ENCODE measurements at regions of chr11 and their contacts with region 1.

Region 1: DNA sequence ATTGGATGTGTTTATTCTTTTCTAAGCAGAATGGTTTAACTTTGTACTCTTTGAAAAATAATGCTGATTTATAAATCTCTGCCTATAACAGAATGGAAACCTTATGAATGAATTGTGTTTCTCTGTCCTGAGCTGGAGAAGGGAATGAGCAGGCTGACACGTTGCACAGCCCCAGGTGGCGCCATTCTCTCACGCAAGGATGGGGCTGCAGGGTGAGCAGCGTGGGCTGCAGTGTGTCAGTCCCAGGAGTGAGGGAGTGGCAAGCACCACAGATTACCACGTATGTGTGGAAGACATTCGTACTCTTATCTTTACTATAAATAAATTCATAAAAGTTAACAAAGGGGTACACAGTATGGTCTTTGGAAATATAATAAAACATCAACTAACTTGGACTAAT is 33.4 kb downstream of the FDX1 start:
- DNase-seq: peak; percentile 70 to 79
- H3K4me3 ChIP-seq: no peak overlapping the region
- H3K4me3 Mint-ChIP-seq: no peak overlapping the region
- H3K27ac Mint-ChIP-seq: peak overlapping the region; percentile 24
- H3K4me1 ChIP-seq: no peaks in the 10 kb centered on the region
- H3K4me1 Mint-ChIP-seq: no peaks in the 10 kb centered on the region
- H3K27me3 ChIP-seq: no peaks in the 10 kb centered on the region
- H3K27me3 Mint-ChIP-seq: no peaks in the 10 kb centered on the region
- CTCF ChIP-seq: peak; percentile 73 to 75

Region 2: DNA sequence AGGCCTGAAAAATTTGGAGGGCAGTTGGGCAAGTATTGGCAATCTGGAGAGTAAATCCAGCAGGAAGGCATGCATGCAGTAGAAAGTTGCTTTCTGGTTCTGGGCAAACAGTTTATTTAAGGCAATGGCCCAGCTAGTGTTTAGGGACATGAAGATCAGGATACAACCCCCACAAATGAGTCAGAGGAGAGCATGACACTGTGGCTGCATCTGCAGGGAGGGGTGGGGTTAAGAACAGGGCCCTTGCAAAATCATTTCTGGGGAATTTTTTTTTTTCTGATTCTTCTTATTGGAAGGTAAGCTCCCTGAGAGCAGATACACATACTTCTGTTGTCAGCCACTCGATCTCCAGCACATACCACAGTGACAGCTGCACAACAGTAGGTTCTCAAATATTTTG is 27.7 kb after region 1 on chr11:
- CTCF ChIA-PET with region 1: no interaction called
- POLR2A ChIA-PET with region 1: no interaction called
- intact Hi-C with region 1: no loop called
- DNase-seq: no peak
- H3K4me3 ChIP-seq: no peak overlapping the region
- H3K4me3 Mint-ChIP-seq: no peak overlapping the region
- H3K27ac Mint-ChIP-seq: no peak overlapping the region
- H3K4me1 ChIP-seq: no peaks in the 10 kb centered on the region
- H3K4me1 Mint-ChIP-seq: no peaks in the 10 kb centered on the region
- H3K27me3 ChIP-seq: no peaks in the 10 kb centered on the region
- H3K27me3 Mint-ChIP-seq: peaks cover 6% of the 10 kb centered on the region
- CTCF ChIP-seq: no peak

Region 3: GRCh38 chr11:110582728-110583432 is 119.7 kb after region 1 on chr11:
- CTCF ChIA-PET with region 1: interaction called, 5 read pairs
- POLR2A ChIA-PET with region 1: no interaction called
- intact Hi-C with region 1: loop called (anchors 5 kb)
- DNase-seq: peak in 1 of 2 experiments; percentile 45
- H3K4me3 ChIP-seq: no peak overlapping the region
- H3K4me3 Mint-ChIP-seq: no peak overlapping the region
- H3K27ac Mint-ChIP-seq: peak overlapping the region; percentile 30
- H3K4me1 ChIP-seq: peaks cover 21% of the 10 kb centered on the region
- H3K4me1 Mint-ChIP-seq: peaks cover 24% of the 10 kb centered on the region
- H3K27me3 ChIP-seq: no peaks in the 10 kb centered on the region
- H3K27me3 Mint-ChIP-seq: no peaks in the 10 kb centered on the region
- CTCF ChIP-seq: no peak

Region 4: GRCh38 chr11:110665696-110666465 is 202.7 kb after region 1 on chr11:
- CTCF ChIA-PET with region 1: no interaction called
- POLR2A ChIA-PET with region 1: no interaction called
- intact Hi-C with region 1: no loop called
- DNase-seq: no peak
- H3K4me3 ChIP-seq: no peak overlapping the region
- H3K4me3 Mint-ChIP-seq: no peak overlapping the region
- H3K27ac Mint-ChIP-seq: no peak overlapping the region
- H3K4me1 ChIP-seq: no peaks in the 10 kb centered on the region
- H3K4me1 Mint-ChIP-seq: no peaks in the 10 kb centered on the region
- H3K27me3 ChIP-seq: no peaks in the 10 kb centered on the region
- H3K27me3 Mint-ChIP-seq: peaks cover 6% of the 10 kb centered on the region
- CTCF ChIP-seq: no peak

Region 5: GRCh38 chr11:110738641-110739040 is 275.5 kb after region 1 on chr11:
- CTCF ChIA-PET with region 1: no interaction called
- POLR2A ChIA-PET with region 1: no interaction called
- intact Hi-C with region 1: loop called (anchors 2 kb)
- DNase-seq: peak in 1 of 2 experiments; percentile 14
- H3K4me3 ChIP-seq: no peak overlapping the region
- H3K4me3 Mint-ChIP-seq: no peak overlapping the region
- H3K27ac Mint-ChIP-seq: no peak overlapping the region
- H3K4me1 ChIP-seq: no peaks in the 10 kb centered on the region
- H3K4me1 Mint-ChIP-seq: no peaks in the 10 kb centered on the region
- H3K27me3 ChIP-seq: no peaks in the 10 kb centered on the region
- H3K27me3 Mint-ChIP-seq: peaks cover 14% of the 10 kb centered on the region
- CTCF ChIP-seq: peak in 1 of 2 experiments; percentile 14

Region 6: GRCh38 chr11:111446404-111447111 is 983.4 kb after region 1 on chr11:
- CTCF ChIA-PET with region 1: no interaction called
- POLR2A ChIA-PET with region 1: no interaction called
- intact Hi-C with region 1: loop called (anchors 1 kb)
- DNase-seq: peak; percentile 91
- H3K4me3 ChIP-seq: no peak overlapping the region
- H3K4me3 Mint-ChIP-seq: no peak overlapping the region
- H3K27ac Mint-ChIP-seq: no peak overlapping the region
- H3K4me1 ChIP-seq: no peaks in the 10 kb centered on the region; the same call in 1 of the 2 replicates
- H3K4me1 Mint-ChIP-seq: no peaks in the 10 kb centered on the region
- H3K27me3 ChIP-seq: peaks cover 2% of the 10 kb centered on the region; the same call in 1 of the 2 replicates
- H3K27me3 Mint-ChIP-seq: peaks cover 2% of the 10 kb centered on the region
- CTCF ChIP-seq: peak; percentile 96 to 99

Measured in Caco-2 (cell line).